B cell (primary cell): ENCODE measurements at regions of chr9 and their contacts with region 1.

Region 1: DNA sequence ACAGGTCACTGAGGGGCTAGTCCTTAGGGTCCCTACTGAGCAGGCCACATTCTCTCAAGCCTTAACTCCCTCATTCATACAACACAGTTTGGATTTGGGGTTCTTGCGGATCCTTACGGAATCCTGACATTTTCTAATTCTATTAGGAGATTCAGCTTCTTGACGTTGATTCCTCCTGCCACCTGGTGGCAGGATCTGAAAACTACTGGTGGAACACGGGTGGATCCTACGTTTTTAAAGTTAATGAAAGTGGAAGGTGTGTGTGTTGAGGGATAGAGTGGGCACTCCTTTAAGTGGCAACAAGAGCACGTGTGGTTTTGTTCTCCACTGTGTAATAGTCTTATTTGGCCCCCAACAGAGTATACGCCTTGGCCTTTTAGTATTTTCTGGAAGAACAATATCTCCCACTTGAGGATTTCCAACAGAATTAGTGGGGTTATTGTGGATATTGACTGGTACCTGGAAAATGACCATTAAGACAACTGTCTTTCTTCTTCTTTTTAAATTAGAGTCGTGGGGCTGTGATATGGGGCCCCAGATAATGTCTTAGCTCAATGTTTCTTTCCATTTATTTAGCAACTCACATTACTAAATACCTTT is 25.2 kb downstream of the SLC28A3 start:
- DNase-seq: peak; percentile 72
- ATAC-seq: peak; percentile 33
- H3K4me3 ChIP-seq: no peak overlapping the region
- H3K4me3 Mint-ChIP-seq: no peak overlapping the region
- H3K27ac ChIP-seq: no peak overlapping the region
- H3K27ac Mint-ChIP-seq: no peak overlapping the region
- H3K4me1 ChIP-seq: peaks cover 0 to 3% of the 10 kb centered on the region in 2 donors
- H3K4me1 Mint-ChIP-seq: peaks cover 5% of the 10 kb centered on the region
- H3K27me3 ChIP-seq: no peaks in the 10 kb centered on the region
- H3K27me3 Mint-ChIP-seq: peaks cover 6% of the 10 kb centered on the region
- CTCF ChIP-seq: peak; percentile 81

Region 2: DNA sequence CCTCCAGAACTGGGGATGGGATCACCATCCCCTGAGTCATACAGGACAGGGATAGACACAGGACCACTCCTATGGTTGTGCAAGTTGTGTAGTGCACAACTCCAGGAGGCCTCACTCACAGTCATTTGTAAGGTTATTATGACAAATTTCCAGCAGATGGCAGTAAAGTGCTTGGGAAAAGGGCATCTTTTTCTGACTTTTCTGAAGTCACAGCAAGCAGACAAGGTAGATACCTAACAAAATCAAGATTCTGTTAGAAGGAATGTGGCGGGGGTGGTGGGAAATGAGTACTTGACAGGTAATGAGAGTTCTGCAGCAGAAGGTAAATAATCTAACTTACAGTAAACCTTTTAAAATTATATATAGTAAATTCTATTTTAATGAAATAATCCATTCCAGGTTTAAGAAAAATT is 377.5 kb before region 1 on chr9:
- CTCF ChIA-PET with region 1: interaction called, 34 read pairs
- POLR2A ChIA-PET with region 1: no interaction called
- intact Hi-C with region 1: loop called (anchors 1 kb)
- DNase-seq: peak; percentile 80
- ATAC-seq: peak; percentile 68
- H3K4me3 ChIP-seq: no peak overlapping the region
- H3K4me3 Mint-ChIP-seq: no peak overlapping the region
- H3K27ac ChIP-seq: no peak overlapping the region
- H3K27ac Mint-ChIP-seq: no peak overlapping the region
- H3K4me1 ChIP-seq: no peaks in the 10 kb centered on the region
- H3K4me1 Mint-ChIP-seq: no peaks in the 10 kb centered on the region
- H3K27me3 ChIP-seq: no peaks in the 10 kb centered on the region
- H3K27me3 Mint-ChIP-seq: no peaks in the 10 kb centered on the region
- CTCF ChIP-seq: peak; percentile 92

Region 3: DNA sequence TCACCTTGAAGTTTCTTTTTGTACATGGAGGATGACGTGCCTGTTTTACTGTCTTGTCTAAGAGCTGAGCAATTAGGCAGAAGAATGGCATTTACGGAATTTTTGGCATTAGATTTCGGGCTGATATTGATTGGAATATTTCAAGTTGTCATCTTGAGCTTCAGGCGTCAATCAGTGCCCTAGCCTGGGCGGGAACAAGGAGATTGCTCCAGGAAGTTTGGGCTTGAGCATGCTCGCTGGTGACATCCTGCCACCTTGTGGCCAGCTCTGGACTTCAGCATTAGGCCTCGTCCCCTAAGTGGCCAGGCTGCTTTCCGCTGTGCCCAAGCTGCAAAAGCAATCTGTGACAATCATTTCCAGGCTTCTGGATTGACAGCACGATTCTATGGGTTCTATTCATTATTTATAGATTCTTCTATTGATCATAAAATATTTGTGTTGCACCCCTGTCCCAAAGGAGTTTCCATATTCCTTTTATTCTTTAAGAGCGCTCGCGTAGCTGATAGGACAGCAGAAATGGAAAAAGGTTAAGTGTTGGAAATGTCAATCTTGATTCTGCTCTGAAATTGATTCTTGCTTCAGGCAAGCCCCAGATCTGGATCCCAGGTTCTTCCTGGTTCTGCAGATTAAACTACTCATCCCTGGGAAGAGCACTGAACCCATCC is 54.2 kb before region 1 on chr9:
- CTCF ChIA-PET with region 1: interaction called, 8 read pairs
- POLR2A ChIA-PET with region 1: no interaction called
- intact Hi-C with region 1: loop called (anchors 1 kb)
- DNase-seq: peak; percentile 65
- ATAC-seq: peak; percentile 58
- H3K4me3 ChIP-seq: no peak overlapping the region
- H3K4me3 Mint-ChIP-seq: peak overlapping the region; percentile 61
- H3K27ac ChIP-seq: no peak overlapping the region
- H3K27ac Mint-ChIP-seq: no peak overlapping the region
- H3K4me1 ChIP-seq: peaks cover 3 to 8% of the 10 kb centered on the region in 2 donors
- H3K4me1 Mint-ChIP-seq: peaks cover 4% of the 10 kb centered on the region
- H3K27me3 ChIP-seq: peaks cover 0 to 4% (median 2%) of the 10 kb centered on the region in 4 experiments
- H3K27me3 Mint-ChIP-seq: peaks cover 24% of the 10 kb centered on the region
- CTCF ChIP-seq: peak; percentile 79

Region 4: GRCh38 chr9:84293001-84293798 is 22.2 kb before region 1 on chr9:
- CTCF ChIA-PET with region 1: interaction called, 15 read pairs
- POLR2A ChIA-PET with region 1: no interaction called
- intact Hi-C with region 1: no loop called
- DNase-seq: peak; percentile 47
- ATAC-seq: peak; percentile 65
- H3K4me3 ChIP-seq: peak overlapping the region in 4 of 5 experiments; percentile 2 to 45 (median 4)
- H3K4me3 Mint-ChIP-seq: peak overlapping the region; percentile 82
- H3K27ac ChIP-seq: peak overlapping the region; percentile 56 to 73
- H3K27ac Mint-ChIP-seq: peak overlapping the region; percentile 96
- H3K4me1 ChIP-seq: peaks cover 43% of the 10 kb centered on the region in 2 donors
- H3K4me1 Mint-ChIP-seq: peaks cover 40% of the 10 kb centered on the region
- H3K27me3 ChIP-seq: no peaks in the 10 kb centered on the region
- H3K27me3 Mint-ChIP-seq: no peaks in the 10 kb centered on the region
- CTCF ChIP-seq: no peak

Region 5: GRCh38 chr9:84301851-84302250 is 13.5 kb before region 1 on chr9:
- CTCF ChIA-PET with region 1: interaction called, 12 read pairs
- POLR2A ChIA-PET with region 1: no interaction called
- intact Hi-C with region 1: no loop called
- DNase-seq: no peak
- ATAC-seq: no peak
- H3K4me3 ChIP-seq: no peak overlapping the region
- H3K4me3 Mint-ChIP-seq: no peak overlapping the region
- H3K27ac ChIP-seq: no peak overlapping the region
- H3K27ac Mint-ChIP-seq: no peak overlapping the region
- H3K4me1 ChIP-seq: peaks cover under 1% of the 10 kb centered on the region in 2 donors
- H3K4me1 Mint-ChIP-seq: peaks cover under 1% of the 10 kb centered on the region
- H3K27me3 ChIP-seq: no peaks in the 10 kb centered on the region
- H3K27me3 Mint-ChIP-seq: peaks cover 4% of the 10 kb centered on the region
- CTCF ChIP-seq: no peak

Region 6: GRCh38 chr9:84557751-84558150 is 242.4 kb after region 1 on chr9:
- CTCF ChIA-PET with region 1: no interaction called
- POLR2A ChIA-PET with region 1: no interaction called
- intact Hi-C with region 1: no loop called
- DNase-seq: no peak
- ATAC-seq: no peak
- H3K4me3 ChIP-seq: no peak overlapping the region
- H3K4me3 Mint-ChIP-seq: no peak overlapping the region
- H3K27ac ChIP-seq: no peak overlapping the region
- H3K27ac Mint-ChIP-seq: no peak overlapping the region
- H3K4me1 ChIP-seq: no peaks in the 10 kb centered on the region
- H3K4me1 Mint-ChIP-seq: no peaks in the 10 kb centered on the region
- H3K27me3 ChIP-seq: no peaks in the 10 kb centered on the region
- H3K27me3 Mint-ChIP-seq: peaks cover 5% of the 10 kb centered on the region
- CTCF ChIP-seq: no peak